ENCODE measurements at regions of chr10 and their contacts with region 1.

Region 1: GRCh38 chr10:73529089-73529832 is 33.4 kb upstream of the PPP3CB start:
- DNase-seq: peak; percentile 79
- CTCF ChIP-seq: peak; percentile 72

Region 2: GRCh38 chr10:72948762-72949161 is 580.5 kb before region 1 on chr10:
- in situ Hi-C with region 1: no loop called
- DNase-seq: no peak
- CTCF ChIP-seq: no peak

Region 3: DNA sequence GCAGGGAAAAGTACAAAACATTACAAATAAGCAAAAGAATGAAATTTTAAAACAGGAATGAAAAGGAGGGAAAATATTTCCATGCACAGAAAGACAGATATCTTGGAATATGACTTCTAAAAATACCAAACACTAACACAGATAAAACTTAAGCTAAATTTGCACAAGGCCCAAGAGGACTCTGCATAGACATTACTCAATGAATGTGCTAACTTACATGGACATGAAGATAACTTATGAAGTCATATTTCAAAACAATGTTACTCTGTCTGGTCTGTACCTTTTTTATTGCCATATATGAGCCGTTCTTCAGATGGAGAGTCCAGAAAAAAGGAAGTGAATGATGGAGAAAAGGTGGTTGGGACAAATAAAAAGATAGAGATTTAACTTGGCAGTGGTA is 80.9 kb before region 1 on chr10:
- in situ Hi-C with region 1: no loop called
- DNase-seq: no peak
- CTCF ChIP-seq: no peak

Region 4: DNA sequence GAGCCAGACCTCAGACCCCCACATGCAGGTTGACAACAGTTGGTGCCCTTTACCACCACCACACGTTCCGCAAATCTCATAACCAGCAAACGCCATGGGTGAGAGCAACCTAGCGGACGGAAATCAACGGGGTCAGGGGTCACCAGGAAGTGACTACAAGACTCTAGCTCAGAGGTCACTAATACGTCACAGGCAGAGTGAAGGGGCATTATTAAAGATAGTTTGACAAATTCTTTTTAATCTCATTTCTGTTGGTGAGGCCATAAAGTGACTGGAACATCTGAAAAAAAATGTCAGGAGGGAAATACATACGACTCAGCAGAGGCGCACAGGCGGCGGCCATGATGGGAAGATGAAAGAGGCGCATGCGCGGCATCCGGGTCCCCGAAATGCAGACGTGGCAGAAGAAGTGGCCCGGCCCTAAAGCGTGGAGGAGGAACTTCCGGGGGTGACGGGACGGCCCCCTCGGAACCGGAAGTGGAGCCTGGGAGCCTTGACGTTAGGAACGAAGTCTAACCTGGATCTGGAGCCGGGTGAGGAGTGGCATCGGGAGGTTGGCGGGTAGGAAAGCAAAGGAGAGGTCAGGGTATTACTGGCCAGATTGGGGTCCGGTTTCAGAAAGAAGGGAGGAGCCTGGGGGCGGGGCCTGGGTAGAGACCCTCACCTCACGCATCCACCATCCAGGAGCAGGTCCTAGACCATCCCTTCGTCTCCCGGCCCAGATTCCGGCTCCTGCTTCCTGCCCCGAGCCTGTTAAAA is 214.8 kb after region 1 on chr10 and contains the start of gene SEC24C:
- in situ Hi-C with region 1: loop called (anchors 25 kb)
- DNase-seq: peak; percentile 91
- CTCF ChIP-seq: no peak